K562 (cell line): ENCODE measurements at regions of chr3 and their contacts with region 1.

Region 1: GRCh38 chr3:65500398-65501306 is 538.1 kb downstream of the MAGI1 start:
- DNase-seq: peak; percentile 56 to 86 (median 67)
- ATAC-seq: peak; percentile 82
- H3K4me3 ChIP-seq: no peak overlapping the region
- H3K27ac ChIP-seq: peak overlapping the region; percentile 73
- H3K4me1 ChIP-seq: peaks cover 0 to 37% of the 10 kb centered on the region in 2 experiments; a peak in 3 of 5 replicates
- H3K27me3 ChIP-seq: no peaks in the 10 kb centered on the region
- CTCF ChIP-seq: no peak
- EP300 ChIP-seq: peak; percentile 91
- POLR2A ChIP-seq: no peak
- RAD21 ChIP-seq: no peak

Region 2: DNA sequence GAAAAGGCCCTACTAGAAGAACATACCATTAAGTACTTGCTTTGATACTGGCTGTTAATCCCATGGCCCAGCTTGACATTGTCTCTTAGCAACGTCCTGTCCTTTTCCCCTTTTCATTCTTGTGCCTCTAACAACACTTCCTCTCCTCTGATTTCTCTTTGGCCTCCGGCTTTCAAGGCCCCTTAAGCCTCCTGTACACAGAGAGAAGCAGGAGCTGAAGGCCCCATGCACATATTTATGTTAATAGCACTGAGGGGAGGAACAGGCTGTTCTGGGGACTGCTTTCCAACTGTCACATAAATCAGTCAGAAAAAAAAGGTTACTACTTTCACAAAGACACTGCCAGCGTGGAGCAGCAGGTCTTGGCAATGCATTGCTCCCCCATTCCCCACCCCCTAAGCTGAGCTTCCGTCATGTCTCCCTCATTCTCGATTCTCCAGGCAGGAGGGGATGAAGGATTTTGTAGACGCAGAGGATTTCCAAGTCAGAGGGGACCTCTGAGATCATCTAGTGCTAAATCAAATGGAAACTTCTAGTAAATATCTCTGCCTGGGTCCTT is 555.4 kb before region 1 on chr3:
- CTCF ChIA-PET with region 1: no interaction called
- POLR2A ChIA-PET with region 1: no interaction called
- in situ Hi-C with region 1: no loop called
- intact Hi-C with region 1: no loop called
- DNase-seq: peak in 2 of 4 experiments; percentile 3 to 8
- ATAC-seq: peak; percentile 37; the same call in 1 of the 3 replicates
- H3K4me3 ChIP-seq: no peak overlapping the region
- H3K27ac ChIP-seq: no peak overlapping the region
- H3K4me1 ChIP-seq: peaks cover 0 to 2% of the 10 kb centered on the region in 2 experiments; a peak in 2 of 5 replicates
- H3K27me3 ChIP-seq: no peaks in the 10 kb centered on the region
- CTCF ChIP-seq: no peak
- EP300 ChIP-seq: no peak
- POLR2A ChIP-seq: no peak
- RAD21 ChIP-seq: no peak

Region 3: DNA sequence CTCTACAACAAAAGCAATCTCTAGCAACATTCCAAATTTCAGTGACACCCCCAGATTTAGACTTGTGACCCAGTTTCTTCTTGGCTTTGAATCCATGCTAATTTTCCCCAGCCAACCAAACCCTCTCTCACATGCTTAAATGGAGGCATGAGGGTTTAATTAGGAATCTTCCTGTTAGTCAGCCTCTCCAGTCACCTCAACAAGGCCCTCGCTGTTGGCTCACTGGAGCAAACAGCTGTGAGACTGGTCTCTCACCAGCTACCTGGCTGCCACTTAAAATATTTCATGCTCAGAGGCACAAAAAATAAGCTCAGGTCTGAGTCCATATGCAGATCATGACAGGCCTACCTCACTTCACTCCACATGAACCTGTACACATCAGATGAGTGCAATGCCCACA is 182.4 kb before region 1 on chr3:
- CTCF ChIA-PET with region 1: no interaction called
- POLR2A ChIA-PET with region 1: no interaction called
- in situ Hi-C with region 1: no loop called
- intact Hi-C with region 1: no loop called
- DNase-seq: no peak
- ATAC-seq: no peak
- H3K4me3 ChIP-seq: no peak overlapping the region
- H3K27ac ChIP-seq: no peak overlapping the region
- H3K4me1 ChIP-seq: no peaks in the 10 kb centered on the region
- H3K27me3 ChIP-seq: no peaks in the 10 kb centered on the region
- CTCF ChIP-seq: no peak
- EP300 ChIP-seq: no peak
- POLR2A ChIP-seq: no peak
- RAD21 ChIP-seq: no peak

Region 4: GRCh38 chr3:65532215-65532614 is 31.6 kb after region 1 on chr3:
- CTCF ChIA-PET with region 1: no interaction called
- POLR2A ChIA-PET with region 1: interaction called, 3 read pairs
- in situ Hi-C with region 1: no loop called
- intact Hi-C with region 1: loop called (anchors 2 kb)
- DNase-seq: no peak
- ATAC-seq: no peak; the same call in 1 of the 3 replicates
- H3K4me3 ChIP-seq: peak overlapping the region; percentile 26
- H3K27ac ChIP-seq: peak overlapping the region; percentile 42; the same call in 1 of the 3 replicates
- H3K4me1 ChIP-seq: peaks cover 0 to 34% of the 10 kb centered on the region in 2 experiments; a peak in 3 of 5 replicates
- H3K27me3 ChIP-seq: no peaks in the 10 kb centered on the region
- CTCF ChIP-seq: no peak
- EP300 ChIP-seq: no peak
- POLR2A ChIP-seq: no peak
- RAD21 ChIP-seq: no peak

Region 5: DNA sequence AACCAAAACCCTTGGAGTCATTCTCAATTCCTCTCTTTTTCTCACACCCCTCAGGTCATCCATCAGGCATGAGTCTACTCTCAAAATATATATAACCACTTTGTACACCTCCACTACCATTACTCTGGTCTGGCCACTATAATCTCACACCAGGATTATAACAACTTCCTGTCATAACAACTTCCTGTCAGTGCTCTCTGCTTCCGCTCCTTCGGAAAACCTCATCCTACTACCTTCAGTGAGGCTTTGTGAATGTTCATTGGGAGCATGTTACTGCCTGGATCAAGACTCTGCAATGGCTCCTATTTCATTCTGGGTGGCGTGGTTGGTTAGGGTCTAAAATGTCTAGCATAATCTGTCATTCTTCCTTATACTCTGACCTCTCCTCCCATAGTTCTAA is 90.7 kb after region 1 on chr3:
- CTCF ChIA-PET with region 1: no interaction called
- POLR2A ChIA-PET with region 1: no interaction called
- in situ Hi-C with region 1: no loop called
- intact Hi-C with region 1: loop called (anchors 2 kb)
- DNase-seq: peak in 1 of 4 experiments; percentile 58
- ATAC-seq: peak; percentile 17
- H3K4me3 ChIP-seq: no peak overlapping the region
- H3K27ac ChIP-seq: peak overlapping the region; percentile 66
- H3K4me1 ChIP-seq: peaks cover 4 to 64% of the 10 kb centered on the region in 2 experiments
- H3K27me3 ChIP-seq: no peaks in the 10 kb centered on the region
- CTCF ChIP-seq: no peak
- EP300 ChIP-seq: no peak
- POLR2A ChIP-seq: peak; percentile 49
- RAD21 ChIP-seq: no peak